Left cardiac atrium (tissue), 4 donors: ENCODE measurements at regions of chr4 and their contacts with region 1.

Region 1: DNA sequence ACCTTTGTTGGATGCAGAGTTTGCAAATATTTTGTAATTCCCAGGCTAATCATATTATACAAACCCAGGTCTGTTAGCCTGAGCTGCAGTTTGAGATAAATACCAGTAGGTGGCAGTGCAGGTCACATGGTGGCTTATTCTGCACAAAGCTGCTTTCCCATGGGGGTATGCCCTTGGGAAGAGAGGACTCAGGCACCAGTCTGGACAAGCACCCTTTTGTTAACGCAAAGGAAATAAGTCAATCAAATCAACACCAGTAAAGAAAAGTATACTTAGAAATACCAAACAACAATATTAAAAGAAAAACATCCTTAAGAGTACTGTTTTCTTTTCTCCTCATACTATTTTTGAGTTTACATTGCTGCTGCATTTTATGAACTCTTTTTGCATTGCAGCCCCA is 389.0 kb upstream of the ZFP42 start:
- DNase-seq: no peak
- ATAC-seq: peak in 1 of 2 donors; percentile 55

Region 2: GRCh38 chr4:189124149-189124758 is 1517.7 kb after region 1 on chr4:
- intact Hi-C with region 1: loop called in 1 of 2 experiments (anchors 10 kb)
- DNase-seq: no peak
- ATAC-seq: no peak